HepG2 (cell line): ENCODE measurements at regions of chr16 and their contacts with region 1.

Region 1: GRCh38 chr16:20763461-20764232 is at the start of gene ACSM3:
- DNase-seq: peak; percentile 83
- ATAC-seq: peak; percentile 98
- H3K4me3 ChIP-seq: peak within 1 kb of the TSS; percentile 55 to 68 (median 62)
- H3K27ac ChIP-seq: peak within 1 kb of the TSS; percentile 48
- H3K4me1 ChIP-seq: peaks cover 39% of the 10 kb centered on the region
- H3K27me3 ChIP-seq: no peaks in the 10 kb centered on the region
- CTCF ChIP-seq: no peak
- EP300 ChIP-seq: no peak
- POLR2A ChIP-seq: peak in 1 of 2 experiments; percentile 50; a peak in 1 of 4 replicates
- RAD21 ChIP-seq: no peak
- total RNA-seq, gene ACSM3: 108 and 125 TPM in 2 replicates

Region 2: GRCh38 chr16:20727181-20727580 is 36.5 kb before region 1 on chr16:
- CTCF ChIA-PET with region 1: no interaction called
- POLR2A ChIA-PET with region 1: no interaction called
- in situ Hi-C with region 1: no loop called
- intact Hi-C with region 1: no loop called
- DNase-seq: no peak
- ATAC-seq: no peak; the same call in 2 of the 3 replicates
- H3K4me3 ChIP-seq: no peak overlapping the region
- H3K27ac ChIP-seq: no peak overlapping the region
- H3K4me1 ChIP-seq: no peaks in the 10 kb centered on the region
- H3K27me3 ChIP-seq: no peaks in the 10 kb centered on the region
- CTCF ChIP-seq: no peak
- EP300 ChIP-seq: no peak
- POLR2A ChIP-seq: no peak
- RAD21 ChIP-seq: no peak

Region 3: GRCh38 chr16:20741554-20742285 is 21.9 kb before region 1 on chr16 and contains the start of gene THUMPD1:
- CTCF ChIA-PET with region 1: no interaction called
- POLR2A ChIA-PET with region 1: interaction called, 23 read pairs
- in situ Hi-C with region 1: no loop called
- intact Hi-C with region 1: no loop called
- DNase-seq: peak; percentile 95
- ATAC-seq: peak; percentile 94
- H3K4me3 ChIP-seq: peak within 1 kb of the TSS; percentile 89 to 99 (median 97)
- H3K27ac ChIP-seq: peak within 1 kb of the TSS; percentile 87
- H3K4me1 ChIP-seq: peaks cover 34% of the 10 kb centered on the region
- H3K27me3 ChIP-seq: no peaks in the 10 kb centered on the region; a peak in 1 of 5 replicates
- CTCF ChIP-seq: peak; percentile 57; the same call in 1 of the 2 replicates
- EP300 ChIP-seq: peak; percentile 33 to 94; a peak in 3 of 4 replicates
- POLR2A ChIP-seq: peak; percentile 89 to 94
- RAD21 ChIP-seq: peak; percentile 66; the same call in 1 of the 2 replicates
- total RNA-seq, gene THUMPD1: 69.1 and 102 TPM in 2 replicates

Region 4: DNA sequence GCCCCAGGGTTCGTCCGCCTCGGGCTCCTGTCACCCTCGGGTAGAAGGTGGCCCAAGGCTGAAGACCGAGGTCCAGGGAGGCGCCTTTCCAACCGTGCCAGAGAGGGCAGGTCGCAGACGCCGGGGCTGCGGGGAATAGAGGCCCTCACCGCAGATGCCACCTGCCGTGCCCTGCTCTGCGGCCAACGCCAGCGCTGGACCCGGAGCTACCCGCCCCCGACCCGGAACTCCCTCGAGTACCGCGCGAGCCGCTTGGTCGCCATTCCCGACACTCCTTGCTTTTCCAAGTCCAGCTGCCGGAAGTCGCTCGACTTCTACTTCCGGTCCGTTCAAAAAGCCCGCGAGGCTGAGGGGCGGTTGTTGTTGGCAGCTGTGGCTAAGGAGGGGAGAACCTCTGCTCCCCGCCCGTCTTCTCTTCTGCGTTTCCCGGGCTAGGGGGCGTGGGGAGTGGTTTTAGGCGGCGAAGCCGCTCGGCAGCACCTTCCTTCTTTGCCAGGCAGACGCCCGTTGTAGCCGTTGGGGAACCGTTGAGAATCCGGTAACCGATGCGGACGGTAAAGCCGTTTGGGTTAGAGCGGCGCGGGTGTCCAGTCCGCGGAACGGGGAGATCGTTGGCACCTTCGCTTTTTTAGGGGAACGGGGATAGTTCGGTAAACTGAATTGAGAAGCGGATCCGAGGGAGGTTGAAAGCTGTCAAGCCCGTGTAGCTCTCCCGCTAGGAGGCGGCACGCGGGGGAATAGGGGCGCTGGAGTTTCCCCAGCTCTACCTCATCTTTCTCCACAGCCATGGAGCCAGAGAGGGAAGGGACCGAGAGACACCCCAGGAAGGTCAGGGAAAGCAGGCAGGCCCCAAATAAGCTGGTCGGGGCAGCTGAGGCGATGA is 42.8 kb after region 1 on chr16 and contains the starts of genes ERI2 and REXO5:
- CTCF ChIA-PET with region 1: no interaction called
- POLR2A ChIA-PET with region 1: interaction called, 13 read pairs
- in situ Hi-C with region 1: no loop called
- intact Hi-C with region 1: no loop called
- DNase-seq: peak; percentile 98
- ATAC-seq: peak; percentile 89
- H3K4me3 ChIP-seq: peak within 1 kb of the TSS; percentile 72 to 98 (median 87)
- H3K27ac ChIP-seq: peak within 1 kb of the TSS; percentile 87
- H3K4me1 ChIP-seq: peaks cover 40% of the 10 kb centered on the region
- H3K27me3 ChIP-seq: no peaks in the 10 kb centered on the region; a peak in 1 of 5 replicates
- CTCF ChIP-seq: peak; percentile 81
- EP300 ChIP-seq: peak; percentile 37 to 52; a peak in 1 of 4 replicates
- POLR2A ChIP-seq: peak; percentile 91 to 93
- RAD21 ChIP-seq: peak; percentile 59
- total RNA-seq, gene ERI2: 41.3 and 53.1 TPM in 2 replicates
- total RNA-seq, gene REXO5: 13.1 and 14.4 TPM in 2 replicates